Activated CD4-positive, alpha-beta memory T cell treated with anti-CD3 and anti-CD28 coated beads for 36 hours (primary cell): ENCODE measurements at regions of chr1 and their contacts with region 1.

Region 1: GRCh38 chr1:89670163-89670562 is 37.2 kb downstream of the LRRC8C start:
- DNase-seq: no peak
- H3K4me3 Mint-ChIP-seq: peak overlapping the region; percentile 53
- H3K27ac Mint-ChIP-seq: peak overlapping the region; percentile 66
- H3K4me1 Mint-ChIP-seq: peaks cover 93% of the 10 kb centered on the region
- H3K27me3 Mint-ChIP-seq: no peaks in the 10 kb centered on the region

Region 2: DNA sequence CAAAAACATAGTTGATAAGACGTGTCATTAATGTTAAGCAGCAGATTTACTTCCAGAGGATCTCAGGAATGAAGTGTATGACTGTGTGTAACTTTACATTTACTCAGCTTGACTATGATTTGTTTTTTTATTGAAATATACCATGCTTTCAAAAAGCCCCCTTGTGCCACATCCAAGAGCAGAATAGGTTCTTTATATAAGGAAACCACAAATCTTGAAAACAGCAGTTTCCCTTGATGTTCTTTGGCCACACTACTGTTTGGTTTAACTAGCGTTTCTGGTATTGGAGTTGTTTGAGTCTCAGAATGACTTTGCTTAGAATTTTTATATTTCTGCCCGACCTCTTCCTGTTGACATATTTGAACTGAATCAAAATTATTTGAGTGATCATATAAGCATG is 12.3 kb before region 1 on chr1:
- CTCF ChIA-PET with region 1: interaction called, 3 read pairs
- POLR2A ChIA-PET with region 1: interaction called, 6 read pairs
- intact Hi-C with region 1: loop called (anchors 1 kb)
- DNase-seq: no peak
- H3K4me3 Mint-ChIP-seq: no peak overlapping the region
- H3K27ac Mint-ChIP-seq: peak overlapping the region; percentile 68
- H3K4me1 Mint-ChIP-seq: peaks cover 92% of the 10 kb centered on the region
- H3K27me3 Mint-ChIP-seq: no peaks in the 10 kb centered on the region

Region 3: DNA sequence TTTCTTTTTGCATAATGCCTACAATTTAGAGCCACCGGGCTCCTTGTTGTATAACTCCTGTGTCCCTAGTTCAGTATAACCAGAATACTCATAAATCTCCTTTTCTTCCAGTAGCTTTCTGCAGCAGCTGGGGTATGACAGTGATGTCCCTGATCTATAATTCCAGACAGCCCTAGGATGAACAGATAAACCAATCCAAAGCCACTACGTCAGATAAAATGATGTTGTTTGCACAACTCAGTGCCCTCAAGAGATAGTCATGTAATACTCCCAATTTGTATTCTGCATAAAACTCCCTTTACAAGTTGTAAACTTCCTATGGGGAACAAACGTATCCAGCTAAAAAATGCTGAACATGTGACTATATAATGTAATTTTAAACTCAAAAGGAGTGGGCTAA is 369.5 kb after region 1 on chr1:
- CTCF ChIA-PET with region 1: no interaction called
- POLR2A ChIA-PET with region 1: no interaction called
- intact Hi-C with region 1: no loop called
- DNase-seq: no peak
- H3K4me3 Mint-ChIP-seq: no peak overlapping the region
- H3K27ac Mint-ChIP-seq: no peak overlapping the region
- H3K4me1 Mint-ChIP-seq: no peaks in the 10 kb centered on the region
- H3K27me3 Mint-ChIP-seq: no peaks in the 10 kb centered on the region